ENCODE measurements at regions of chr15 and their contacts with region 1.

Region 1: DNA sequence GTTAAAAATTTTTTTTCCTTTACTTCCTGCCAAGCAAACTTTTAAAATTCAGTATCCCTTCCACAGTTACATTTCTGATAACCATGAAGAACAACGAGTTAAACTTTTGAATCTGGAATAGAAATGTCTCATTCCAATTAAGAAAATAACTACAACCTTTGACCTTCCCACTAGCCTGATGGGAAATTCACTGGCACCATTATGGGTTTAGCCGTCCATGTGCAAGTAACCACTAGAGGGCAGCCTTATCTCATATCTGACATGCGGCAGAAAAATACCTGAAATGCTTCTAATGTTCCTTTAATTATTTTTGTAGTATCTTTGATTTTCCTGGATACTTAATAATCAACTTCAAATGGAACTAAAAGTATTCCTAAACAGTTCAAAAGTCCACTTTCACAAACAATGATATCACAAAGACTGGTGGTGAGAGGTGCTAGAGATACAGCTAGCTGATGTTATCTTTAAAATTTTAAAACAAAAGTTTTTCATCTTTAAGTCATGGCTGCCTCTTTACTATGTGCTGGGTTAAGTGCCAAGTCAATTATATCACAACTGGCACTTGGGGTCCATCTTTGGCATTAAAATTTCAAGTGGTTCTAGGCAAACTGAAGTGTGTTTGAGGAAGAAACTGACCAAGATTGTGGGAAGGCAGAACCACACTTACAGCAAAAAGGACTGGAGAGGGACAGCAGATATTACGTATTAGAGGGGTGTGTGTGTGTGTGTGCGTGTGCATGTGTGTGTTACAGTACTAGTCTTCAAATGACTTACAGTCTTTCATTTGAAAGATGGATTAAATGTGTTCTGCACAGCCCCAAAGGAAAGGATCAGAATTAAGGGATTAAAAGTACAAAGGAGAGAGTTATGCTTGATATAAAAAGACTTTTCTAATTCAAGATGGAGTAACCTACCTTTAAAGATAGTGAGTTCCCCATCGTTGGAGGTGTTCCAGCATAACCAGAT is 107.1 kb upstream of the ICE2 start:
- DNase-seq: peak; percentile 77
- H3K4me3 ChIP-seq: no peak overlapping the region
- H3K27ac ChIP-seq: no peak overlapping the region
- H3K4me1 ChIP-seq: peaks cover 41% of the 10 kb centered on the region
- H3K27me3 ChIP-seq: no peaks in the 10 kb centered on the region
- CTCF ChIP-seq: peak; percentile 82 to 95 (median 92)
- POLR2A ChIP-seq: no peak

Region 2: GRCh38 chr15:60379525-60380274 is 206.3 kb before region 1 on chr15:
- intact Hi-C with region 1: no loop called
- DNase-seq: no peak
- H3K4me3 ChIP-seq: no peak overlapping the region
- H3K27ac ChIP-seq: peak overlapping the region in 1 of 2 donors; percentile 19
- H3K4me1 ChIP-seq: peaks cover 2% of the 10 kb centered on the region
- H3K27me3 ChIP-seq: no peaks in the 10 kb centered on the region
- CTCF ChIP-seq: no peak
- POLR2A ChIP-seq: no peak

Region 3: GRCh38 chr15:60916679-60917460 is 330.8 kb after region 1 on chr15:
- intact Hi-C with region 1: loop called (anchors 10 kb)
- DNase-seq: peak; percentile 94
- H3K4me3 ChIP-seq: no peak overlapping the region
- H3K27ac ChIP-seq: peak overlapping the region; percentile 12 to 81
- H3K4me1 ChIP-seq: peaks cover 5% of the 10 kb centered on the region
- H3K27me3 ChIP-seq: no peaks in the 10 kb centered on the region
- CTCF ChIP-seq: peak; percentile 73 to 86 (median 81)
- POLR2A ChIP-seq: no peak

Measured in testis (tissue), 5 donors.